ENCODE measurements at regions of chr6 and their contacts with region 1.

Region 1: GRCh38 chr6:32118782-32119628 is 9.0 kb downstream of the ATF6B start:
- DNase-seq: peak; percentile 74
- H3K4me3 ChIP-seq: no peak overlapping the region
- H3K27ac ChIP-seq: peak overlapping the region; percentile 33
- H3K27me3 ChIP-seq: no peaks in the 10 kb centered on the region
- CTCF ChIP-seq: peak; percentile 97

Region 2: DNA sequence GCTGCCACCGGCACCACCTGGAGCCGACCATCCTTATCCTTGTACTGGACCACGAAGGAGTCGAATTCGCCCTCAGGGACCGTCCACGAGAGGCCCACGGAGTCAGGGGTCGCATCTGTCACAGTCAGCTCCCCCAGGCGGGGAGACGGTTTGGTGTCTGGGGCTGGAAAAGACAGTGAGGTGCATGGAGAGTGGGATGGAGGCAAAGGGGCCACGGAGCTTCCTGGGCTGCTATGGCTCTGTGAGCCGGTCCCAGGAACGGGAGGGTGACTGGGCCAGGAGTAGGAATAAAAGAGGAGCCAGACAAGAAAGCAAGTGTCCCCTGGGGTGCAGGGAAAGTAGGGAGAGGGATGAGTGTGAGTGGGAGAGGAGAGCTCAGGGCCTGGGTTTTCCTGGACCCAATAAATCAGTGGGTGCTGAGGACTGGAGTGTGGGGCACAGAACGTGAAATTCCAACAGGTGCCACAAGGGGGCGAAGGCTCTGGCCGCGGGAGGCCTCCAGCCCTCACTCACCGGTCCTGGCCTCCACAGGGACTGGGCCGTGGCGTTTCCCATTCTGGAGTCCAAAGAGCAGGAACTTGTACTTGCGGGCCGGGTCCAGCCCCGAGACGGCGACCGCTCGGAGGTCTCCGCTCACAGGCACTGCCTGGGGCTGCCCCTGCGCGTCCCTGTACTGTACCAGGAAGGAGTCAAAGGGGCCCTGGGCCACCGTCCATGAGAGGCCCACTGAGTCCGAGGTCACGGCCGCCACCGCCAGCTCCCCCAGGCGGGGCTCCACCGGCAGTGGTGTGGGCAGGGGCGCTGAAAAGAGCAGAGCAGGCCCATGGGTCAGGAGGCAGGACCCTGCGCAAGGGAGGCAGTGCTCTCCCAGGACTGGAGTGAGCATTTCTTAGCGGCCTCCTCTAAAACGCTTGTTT is 70.9 kb before region 1 on chr6:
- CTCF ChIA-PET with region 1: interaction called, 20 read pairs
- POLR2A ChIA-PET with region 1: interaction called, 12 read pairs
- DNase-seq: peak; percentile 7
- H3K4me3 ChIP-seq: no peak overlapping the region
- H3K27ac ChIP-seq: no peak overlapping the region
- H3K27me3 ChIP-seq: peaks cover 23% of the 10 kb centered on the region
- CTCF ChIP-seq: peak; percentile 75

Region 3: DNA sequence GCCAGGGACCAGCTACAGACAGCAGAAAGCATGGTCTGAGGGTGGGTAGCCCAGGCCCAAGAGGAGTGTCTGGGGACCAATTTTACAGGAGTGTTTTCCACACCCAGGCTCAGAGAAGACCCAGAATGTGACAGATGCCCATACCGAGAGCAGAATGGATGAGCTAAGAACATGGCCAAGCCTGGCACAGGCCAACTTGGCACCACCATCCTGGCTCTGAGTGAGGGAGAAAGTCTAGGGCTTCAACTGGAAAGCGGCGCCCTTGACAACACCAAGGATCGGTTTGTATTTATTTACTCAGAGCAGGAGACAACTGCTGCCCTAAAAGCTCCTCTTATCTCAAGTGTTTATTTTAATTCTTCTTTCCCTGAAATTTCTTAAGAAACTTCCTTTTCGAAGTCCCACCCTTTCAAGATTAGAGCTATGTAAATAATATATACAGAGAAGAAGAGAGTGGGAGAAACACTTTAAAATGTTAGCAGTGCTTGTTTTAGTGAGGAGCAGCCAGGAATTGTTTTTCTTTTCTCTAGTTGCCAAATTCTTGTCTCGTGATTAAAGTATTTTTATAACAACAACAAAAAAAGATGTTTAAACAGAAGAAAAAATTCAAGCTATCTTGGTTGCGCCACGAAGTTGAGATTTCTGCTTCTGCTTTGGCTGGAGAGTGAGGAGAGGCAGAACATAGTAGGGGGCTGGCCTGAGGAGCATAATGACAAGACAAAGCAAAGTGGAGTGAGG is 26.1 kb before region 1 on chr6:
- CTCF ChIA-PET with region 1: interaction called, 11 read pairs
- POLR2A ChIA-PET with region 1: interaction called, 13 read pairs
- DNase-seq: peak; percentile 74
- H3K4me3 ChIP-seq: no peak overlapping the region
- H3K27ac ChIP-seq: peak overlapping the region; percentile 80
- H3K27me3 ChIP-seq: peaks cover 69% of the 10 kb centered on the region
- CTCF ChIP-seq: no peak

Region 4: GRCh38 chr6:32108094-32108627 is 10.8 kb before region 1 on chr6:
- CTCF ChIA-PET with region 1: interaction called, 18 read pairs
- POLR2A ChIA-PET with region 1: interaction called, 3 read pairs
- DNase-seq: no peak
- H3K4me3 ChIP-seq: no peak overlapping the region
- H3K27ac ChIP-seq: no peak overlapping the region
- H3K27me3 ChIP-seq: peaks cover 42% of the 10 kb centered on the region
- CTCF ChIP-seq: no peak

Region 5: GRCh38 chr6:32156891-32157290 is 37.9 kb after region 1 on chr6:
- CTCF ChIA-PET with region 1: interaction called, 10 read pairs
- POLR2A ChIA-PET with region 1: no interaction called
- DNase-seq: no peak
- H3K4me3 ChIP-seq: no peak overlapping the region
- H3K27ac ChIP-seq: no peak overlapping the region
- H3K27me3 ChIP-seq: no peaks in the 10 kb centered on the region
- CTCF ChIP-seq: no peak

Region 6: DNA sequence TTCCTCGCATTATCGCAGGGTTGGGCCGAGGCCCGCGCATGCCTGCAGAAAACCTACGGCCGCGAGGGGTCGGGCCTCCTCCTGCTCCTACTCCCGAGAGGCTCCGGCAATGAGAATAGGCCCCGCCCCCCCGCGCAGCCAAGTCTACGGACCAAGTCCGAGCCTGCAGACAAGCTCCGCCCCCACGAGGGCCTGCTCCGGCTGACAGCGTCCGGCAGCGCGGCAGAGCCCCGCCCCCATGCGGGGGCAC is 76.6 kb after region 1 on chr6:
- CTCF ChIA-PET with region 1: interaction called, 18 read pairs
- POLR2A ChIA-PET with region 1: no interaction called
- DNase-seq: peak; percentile 100
- H3K4me3 ChIP-seq: peak overlapping the region; percentile 83
- H3K27ac ChIP-seq: no peak overlapping the region
- H3K27me3 ChIP-seq: no peaks in the 10 kb centered on the region
- CTCF ChIP-seq: peak; percentile 56

Region 7: DNA sequence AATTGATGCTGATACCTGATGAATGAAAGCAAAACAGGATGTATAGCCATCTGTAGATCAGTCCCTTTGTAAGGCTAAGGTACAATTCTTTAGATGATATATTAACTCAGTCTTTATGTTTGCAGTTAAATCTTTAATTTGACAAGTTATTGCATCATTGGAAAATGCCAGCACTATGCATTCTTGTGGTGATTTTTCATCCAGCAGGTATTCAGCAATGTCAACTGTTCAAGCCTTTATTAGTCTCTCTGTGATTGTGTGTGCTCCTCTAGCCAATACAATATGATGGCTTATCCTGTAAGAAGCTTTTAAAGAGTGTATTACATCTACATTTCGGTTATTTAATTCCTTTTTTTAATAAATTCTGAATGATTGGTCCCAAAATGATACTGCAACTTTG is 787.5 kb after region 1 on chr6:
- CTCF ChIA-PET with region 1: no interaction called
- POLR2A ChIA-PET with region 1: no interaction called
- DNase-seq: no peak
- H3K4me3 ChIP-seq: no peak overlapping the region
- H3K27ac ChIP-seq: no peak overlapping the region
- H3K27me3 ChIP-seq: no peaks in the 10 kb centered on the region
- CTCF ChIP-seq: no peak